Cardiac septum (tissue), 1 donor: ENCODE measurements at regions of chr15 and their contacts with region 1.

Region 1: GRCh38 chr15:78709263-78709882 is 68.4 kb upstream of the CHRNB4 start:
- DNase-seq: peak; percentile 86

Region 2: DNA sequence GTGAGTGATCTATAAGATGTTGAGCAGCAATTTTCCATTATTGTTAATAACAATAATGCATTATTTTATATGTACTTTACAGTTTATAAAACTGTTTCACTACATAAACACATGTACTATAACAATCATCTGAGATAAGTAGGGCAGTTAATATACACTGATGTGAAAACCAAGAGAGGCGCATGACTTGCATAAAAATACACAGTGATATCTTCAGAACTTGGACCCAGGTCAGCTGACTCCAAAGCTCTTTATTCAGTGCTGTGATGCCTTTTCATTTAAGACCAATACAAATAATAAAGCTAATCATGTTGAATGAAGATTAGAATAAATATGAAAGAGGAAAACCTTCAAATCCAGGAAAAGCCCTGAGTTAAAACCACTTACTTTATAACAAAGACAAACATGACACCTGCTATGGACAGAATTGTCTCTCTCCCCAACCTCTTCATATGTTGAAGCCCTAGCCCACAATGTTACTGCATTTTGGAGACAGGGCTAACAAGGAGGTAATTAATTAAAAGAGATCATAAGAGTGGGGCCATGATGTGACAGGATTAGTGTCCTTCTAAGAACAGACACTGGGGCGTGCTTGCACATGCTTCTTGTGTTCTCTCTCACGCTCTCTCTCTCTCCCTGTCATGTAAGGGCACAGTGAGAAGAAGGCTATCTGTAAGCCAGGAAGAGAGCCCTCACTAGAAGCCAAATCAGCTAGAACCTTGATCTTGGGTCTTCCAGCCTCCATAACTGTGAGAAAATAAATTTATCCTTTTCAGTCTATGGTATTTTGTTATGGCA is 1582.6 kb before region 1 on chr15:
- intact Hi-C with region 1: no loop called
- DNase-seq: no peak

Region 3: DNA sequence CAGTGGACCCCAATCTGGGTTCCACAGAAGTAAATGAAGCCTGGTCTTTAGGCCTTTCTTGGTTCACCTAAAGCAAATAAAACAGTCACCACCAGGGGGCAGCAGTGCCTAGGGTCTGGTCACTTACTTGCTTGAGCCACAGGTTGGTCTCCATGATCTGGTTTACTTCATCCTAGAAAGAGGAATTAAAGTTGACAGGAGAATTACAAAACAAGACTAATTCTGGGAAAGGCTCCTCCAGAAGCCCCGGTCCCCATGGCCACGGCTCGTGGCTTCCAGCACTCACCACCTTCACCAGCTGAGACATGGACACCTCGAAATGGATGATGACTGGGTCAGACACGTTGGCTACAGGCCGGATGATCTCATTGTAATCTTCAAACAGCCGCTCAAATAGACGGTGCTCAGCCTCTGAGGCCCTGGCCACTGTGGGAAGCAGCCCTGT is 90.9 kb before region 1 on chr15:
- intact Hi-C with region 1: loop called (anchors 1 kb)
- DNase-seq: peak; percentile 85

Region 4: GRCh38 chr15:78638658-78639314 is 70.6 kb before region 1 on chr15:
- intact Hi-C with region 1: loop called (anchors 2 kb)
- DNase-seq: no peak